Activated CD4-positive, alpha-beta memory T cell treated with anti-CD3 and anti-CD28 coated beads, Interleukin-2, amount 10 ng/mL, durations not matched to agents 7 days and 5 days (primary cell): ENCODE measurements at regions of chr14 and their contacts with region 1.

Region 1: DNA sequence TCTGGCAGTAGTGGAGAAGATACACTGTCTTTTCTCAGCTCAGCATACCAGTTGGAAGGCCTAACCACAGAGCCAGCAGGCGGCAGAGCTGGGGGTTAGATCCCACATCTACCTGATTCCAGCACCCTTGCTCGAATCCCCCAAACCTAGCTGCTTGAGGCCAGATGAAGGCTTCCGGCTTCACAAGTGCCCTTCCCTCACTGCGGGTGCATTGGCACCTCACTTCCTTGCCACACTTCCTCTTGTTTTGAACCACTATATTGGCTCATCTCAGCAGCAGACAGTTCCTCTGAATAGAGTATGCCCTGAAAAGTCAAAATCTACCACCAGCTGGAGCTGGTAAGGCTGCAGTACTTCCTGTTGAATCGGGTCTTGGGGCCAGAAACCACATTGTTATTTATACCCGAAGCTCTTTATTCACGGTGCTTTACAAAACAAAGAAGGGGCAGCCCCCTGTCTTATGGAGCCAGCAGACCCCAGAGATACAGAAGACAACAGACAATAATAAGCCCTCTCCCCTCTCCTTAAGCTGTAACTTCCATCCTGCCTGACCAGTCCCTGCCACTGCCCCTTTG is 233.7 kb downstream of the EFCAB11 start:
- DNase-seq: peak; percentile 85
- H3K4me3 Mint-ChIP-seq: peak overlapping the region; percentile 33
- H3K27ac Mint-ChIP-seq: peak overlapping the region; percentile 96
- H3K4me1 Mint-ChIP-seq: peaks cover 66% of the 10 kb centered on the region
- H3K27me3 Mint-ChIP-seq: no peaks in the 10 kb centered on the region

Region 2: GRCh38 chr14:89430391-89431236 is 290.2 kb before region 1 on chr14:
- CTCF ChIA-PET with region 1: interaction called, 3 read pairs
- POLR2A ChIA-PET with region 1: interaction called, 11 read pairs
- DNase-seq: peak; percentile 48
- H3K4me3 Mint-ChIP-seq: peak overlapping the region; percentile 76
- H3K27ac Mint-ChIP-seq: peak overlapping the region; percentile 95
- H3K4me1 Mint-ChIP-seq: peaks cover 62% of the 10 kb centered on the region
- H3K27me3 Mint-ChIP-seq: no peaks in the 10 kb centered on the region

Region 3: GRCh38 chr14:89534902-89535685 is 185.7 kb before region 1 on chr14:
- CTCF ChIA-PET with region 1: no interaction called
- POLR2A ChIA-PET with region 1: no interaction called
- DNase-seq: no peak
- H3K4me3 Mint-ChIP-seq: no peak overlapping the region
- H3K27ac Mint-ChIP-seq: no peak overlapping the region
- H3K4me1 Mint-ChIP-seq: peaks cover 3% of the 10 kb centered on the region
- H3K27me3 Mint-ChIP-seq: no peaks in the 10 kb centered on the region

Region 4: GRCh38 chr14:89618811-89619551 is 101.8 kb before region 1 on chr14:
- CTCF ChIA-PET with region 1: interaction called, 9 read pairs
- POLR2A ChIA-PET with region 1: interaction called, 50 read pairs
- DNase-seq: peak; percentile 77
- H3K4me3 Mint-ChIP-seq: peak overlapping the region; percentile 95
- H3K27ac Mint-ChIP-seq: peak overlapping the region; percentile 95
- H3K4me1 Mint-ChIP-seq: peaks cover 61% of the 10 kb centered on the region
- H3K27me3 Mint-ChIP-seq: no peaks in the 10 kb centered on the region

Region 5: DNA sequence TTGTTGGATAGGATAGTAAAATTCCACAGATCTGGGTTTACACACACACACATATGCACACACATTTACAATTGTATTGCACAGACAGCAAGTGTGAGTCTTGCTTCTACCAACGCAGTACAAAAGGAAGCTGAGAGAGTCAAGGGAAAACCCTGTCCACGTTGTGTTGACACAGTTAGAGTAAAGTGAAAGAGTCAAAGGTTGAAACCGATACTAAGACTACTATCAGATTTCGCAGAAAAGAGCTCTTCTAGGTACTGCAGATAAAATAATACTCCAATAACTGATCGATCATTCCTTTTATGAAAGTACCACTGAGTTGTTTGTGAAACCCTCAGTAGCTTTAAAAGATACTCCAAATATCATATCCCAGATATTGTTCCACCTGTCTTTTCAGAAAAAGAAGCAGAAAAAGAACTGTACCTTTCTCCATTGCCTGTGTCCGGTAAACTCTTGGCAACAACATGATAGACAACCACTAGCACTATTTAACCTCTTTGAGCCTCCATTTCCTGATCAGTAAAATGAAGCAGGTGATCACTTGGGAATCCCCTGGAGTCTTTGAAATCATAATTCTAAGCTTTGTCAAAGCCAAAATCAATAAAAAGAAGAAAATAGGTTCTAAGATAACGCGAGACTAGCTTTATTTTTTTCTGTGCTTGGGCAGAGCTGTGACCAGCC is 79.2 kb before region 1 on chr14:
- CTCF ChIA-PET with region 1: interaction called, 5 read pairs
- POLR2A ChIA-PET with region 1: interaction called, 21 read pairs
- DNase-seq: peak; percentile 29
- H3K4me3 Mint-ChIP-seq: peak overlapping the region; percentile 49
- H3K27ac Mint-ChIP-seq: peak overlapping the region; percentile 90
- H3K4me1 Mint-ChIP-seq: peaks cover 43% of the 10 kb centered on the region
- H3K27me3 Mint-ChIP-seq: no peaks in the 10 kb centered on the region

Region 6: DNA sequence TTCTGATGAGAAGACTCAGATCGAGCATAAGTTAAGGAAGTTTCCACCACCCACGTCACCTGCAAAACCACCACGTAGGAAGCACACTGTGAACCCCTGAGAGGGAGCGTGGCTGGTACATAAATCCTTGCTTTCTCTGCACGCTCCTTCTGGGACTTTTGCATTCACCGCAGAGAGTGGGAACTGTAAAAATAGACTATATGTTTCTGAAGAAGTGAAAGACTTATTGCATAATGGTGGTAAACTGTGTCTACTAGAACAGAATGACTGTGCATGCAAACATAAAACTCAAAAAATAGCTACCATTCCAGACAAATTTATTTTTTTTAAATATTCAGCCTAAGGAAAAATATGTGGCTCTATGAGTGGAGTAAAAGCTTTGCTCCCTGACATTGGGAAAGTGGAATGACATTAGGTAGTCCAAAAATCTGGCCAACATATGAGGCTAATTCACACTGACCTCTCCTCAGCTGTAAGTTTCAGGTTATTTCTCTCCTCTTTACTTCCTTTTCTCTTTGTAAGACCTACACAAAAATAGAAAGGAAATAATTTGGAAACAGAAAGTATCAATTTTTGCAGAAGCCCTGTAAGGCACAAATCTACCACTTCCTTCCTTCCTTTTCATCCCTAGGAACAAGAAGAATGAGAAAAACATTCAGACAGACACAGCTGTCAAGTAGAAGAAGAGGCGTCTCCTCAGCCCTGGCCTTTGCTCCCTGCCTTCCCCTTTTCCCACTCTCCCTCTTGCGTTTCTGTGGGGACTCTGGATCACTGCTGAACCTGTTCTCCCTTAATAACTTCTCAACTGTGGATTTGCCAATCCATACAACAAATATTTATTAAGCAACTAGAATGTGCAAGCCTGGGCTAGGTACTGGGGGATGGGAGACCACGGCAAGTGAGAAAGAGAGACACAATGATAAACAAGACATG is 39.5 kb before region 1 on chr14:
- CTCF ChIA-PET with region 1: interaction called, 4 read pairs
- POLR2A ChIA-PET with region 1: interaction called, 14 read pairs
- DNase-seq: peak; percentile 31
- H3K4me3 Mint-ChIP-seq: peak overlapping the region; percentile 36
- H3K27ac Mint-ChIP-seq: peak overlapping the region; percentile 77
- H3K4me1 Mint-ChIP-seq: peaks cover 29% of the 10 kb centered on the region
- H3K27me3 Mint-ChIP-seq: no peaks in the 10 kb centered on the region

Region 7: DNA sequence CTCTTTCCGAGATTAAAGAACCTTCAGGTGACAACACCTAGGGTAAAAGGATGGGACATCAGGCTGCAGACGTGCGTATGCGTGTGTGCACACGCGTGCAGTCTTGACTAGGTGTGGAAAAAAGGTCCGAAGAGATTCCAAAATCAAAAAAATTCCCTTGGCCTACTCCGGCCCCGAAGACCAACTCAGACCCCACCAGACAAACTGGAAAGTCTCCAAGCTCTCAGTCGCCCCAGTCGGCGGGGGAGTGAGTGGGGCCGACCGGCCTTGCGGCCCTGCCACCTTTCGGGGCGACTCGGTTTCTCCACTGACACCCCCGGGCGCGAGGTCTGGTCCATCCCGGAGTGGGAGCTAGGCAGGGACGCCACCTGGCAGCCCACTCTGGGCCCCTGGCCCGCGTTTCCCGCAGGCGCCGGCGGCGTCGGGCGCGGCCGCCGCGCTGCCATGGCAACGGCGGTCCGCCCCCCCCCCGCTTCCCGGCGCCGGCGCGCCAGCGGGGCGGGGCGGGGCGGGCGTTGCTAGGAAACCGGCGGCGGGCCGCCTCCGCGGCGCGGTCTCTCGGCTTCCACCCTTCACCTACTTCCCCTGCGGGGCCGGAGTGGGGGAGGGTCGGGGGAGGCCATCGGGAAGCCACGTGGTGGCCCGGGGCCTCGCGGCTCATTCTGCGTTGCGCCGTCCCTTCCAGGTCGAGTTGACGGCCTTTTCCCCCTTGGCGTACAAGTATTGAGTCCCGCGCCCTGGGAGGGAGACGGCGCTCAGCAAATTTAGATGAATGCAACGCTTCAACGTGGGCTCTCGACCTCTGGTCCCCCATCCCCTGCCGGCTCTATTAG is 19.4 kb before region 1 on chr14:
- CTCF ChIA-PET with region 1: interaction called, 16 read pairs
- POLR2A ChIA-PET with region 1: interaction called, 25 read pairs
- DNase-seq: peak; percentile 85
- H3K4me3 Mint-ChIP-seq: peak overlapping the region; percentile 61
- H3K27ac Mint-ChIP-seq: peak overlapping the region; percentile 54
- H3K4me1 Mint-ChIP-seq: peaks cover 33% of the 10 kb centered on the region
- H3K27me3 Mint-ChIP-seq: no peaks in the 10 kb centered on the region

Region 8: GRCh38 chr14:89767861-89768268 is 47.0 kb after region 1 on chr14:
- CTCF ChIA-PET with region 1: interaction called, 18 read pairs
- POLR2A ChIA-PET with region 1: interaction called, 7 read pairs
- DNase-seq: peak; percentile 68
- H3K4me3 Mint-ChIP-seq: no peak overlapping the region
- H3K27ac Mint-ChIP-seq: no peak overlapping the region
- H3K4me1 Mint-ChIP-seq: peaks cover 18% of the 10 kb centered on the region
- H3K27me3 Mint-ChIP-seq: peaks cover 7% of the 10 kb centered on the region